Right ventricle myocardium inferior (tissue), 1 donor: ENCODE measurements at regions of chr9 and their contacts with region 1.

Region 1: GRCh38 chr9:15422372-15423230 is at the start of gene SNAPC3:
- DNase-seq: peak; percentile 97
- ATAC-seq: peak; percentile 100
- total RNA-seq, gene SNAPC3: 28.2 TPM

Region 2: DNA sequence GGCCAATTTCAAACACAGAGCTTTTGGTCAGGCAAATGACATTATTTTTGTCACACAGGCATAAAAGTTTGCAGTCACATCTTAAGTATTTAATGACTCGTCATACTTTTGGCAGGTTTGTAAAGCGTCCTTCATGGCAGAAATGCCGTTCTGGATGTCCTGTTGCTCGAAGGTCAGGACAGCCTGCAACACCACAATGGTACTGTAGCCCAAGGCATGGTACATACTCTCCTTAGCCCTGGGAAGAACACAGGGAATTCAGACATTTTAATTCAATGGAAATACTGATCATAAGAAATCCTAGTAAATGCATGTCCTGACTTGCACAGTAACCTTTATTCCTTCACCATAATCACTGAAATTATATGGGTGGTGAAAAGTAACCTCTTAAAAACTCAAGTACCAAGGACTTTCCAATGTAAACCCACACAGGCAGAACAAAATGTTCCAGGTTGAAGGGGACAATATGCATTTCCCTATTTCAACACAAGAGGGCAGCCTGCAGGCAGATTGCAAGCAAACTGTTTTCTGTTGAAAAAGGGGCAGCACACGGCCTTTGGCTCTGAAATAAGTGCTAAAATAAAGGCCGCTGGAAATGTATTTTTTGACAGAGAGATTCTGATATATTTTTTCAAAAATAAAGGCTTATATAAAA is 211.3 kb before region 1 on chr9:
- intact Hi-C with region 1: loop called (anchors 5 kb)
- DNase-seq: no peak
- ATAC-seq: peak; percentile 48

Region 3: DNA sequence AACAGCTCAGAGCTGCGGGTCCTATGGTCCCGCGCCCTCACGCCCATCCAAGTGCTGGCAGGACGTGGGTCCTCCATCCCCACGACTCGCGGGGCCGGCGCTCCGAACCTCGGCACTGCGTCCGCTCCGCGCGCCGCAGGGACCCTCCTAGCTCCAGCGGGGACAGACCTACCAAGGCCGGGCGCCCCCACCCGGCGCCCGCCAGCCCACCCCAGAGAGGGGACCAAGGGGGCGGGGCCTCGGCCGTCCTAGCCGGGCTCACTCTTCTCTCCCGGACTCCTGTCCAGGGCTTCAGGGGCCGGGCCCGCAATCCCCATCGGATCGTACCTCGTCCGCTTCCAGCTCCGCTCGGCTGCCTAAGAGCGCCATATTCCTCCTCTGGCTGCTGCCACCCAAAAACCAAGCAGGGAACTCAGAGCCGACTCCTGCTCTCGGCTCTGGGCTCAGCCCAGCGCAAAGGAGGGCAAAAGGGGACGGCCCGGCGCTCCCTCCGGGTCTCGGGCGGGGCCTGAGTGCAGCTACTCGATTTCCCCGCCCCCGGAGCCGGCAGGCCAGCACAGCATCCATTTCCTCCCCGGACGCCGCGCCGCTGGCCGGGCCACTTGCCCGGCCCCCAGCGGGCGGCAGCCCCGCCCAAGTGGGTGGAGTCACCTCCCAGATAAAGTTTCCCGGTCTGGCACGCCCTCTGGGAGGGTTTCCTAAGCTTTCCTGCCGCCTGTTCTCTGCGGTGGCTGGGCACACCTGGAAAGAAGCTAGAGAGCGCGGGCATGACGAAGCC is 115.7 kb before region 1 on chr9 and contains the start of gene TTC39B:
- intact Hi-C with region 1: loop called (anchors 5 kb)
- DNase-seq: peak; percentile 97
- ATAC-seq: peak; percentile 99
- total RNA-seq, gene TTC39B: 1.9 TPM

Region 4: DNA sequence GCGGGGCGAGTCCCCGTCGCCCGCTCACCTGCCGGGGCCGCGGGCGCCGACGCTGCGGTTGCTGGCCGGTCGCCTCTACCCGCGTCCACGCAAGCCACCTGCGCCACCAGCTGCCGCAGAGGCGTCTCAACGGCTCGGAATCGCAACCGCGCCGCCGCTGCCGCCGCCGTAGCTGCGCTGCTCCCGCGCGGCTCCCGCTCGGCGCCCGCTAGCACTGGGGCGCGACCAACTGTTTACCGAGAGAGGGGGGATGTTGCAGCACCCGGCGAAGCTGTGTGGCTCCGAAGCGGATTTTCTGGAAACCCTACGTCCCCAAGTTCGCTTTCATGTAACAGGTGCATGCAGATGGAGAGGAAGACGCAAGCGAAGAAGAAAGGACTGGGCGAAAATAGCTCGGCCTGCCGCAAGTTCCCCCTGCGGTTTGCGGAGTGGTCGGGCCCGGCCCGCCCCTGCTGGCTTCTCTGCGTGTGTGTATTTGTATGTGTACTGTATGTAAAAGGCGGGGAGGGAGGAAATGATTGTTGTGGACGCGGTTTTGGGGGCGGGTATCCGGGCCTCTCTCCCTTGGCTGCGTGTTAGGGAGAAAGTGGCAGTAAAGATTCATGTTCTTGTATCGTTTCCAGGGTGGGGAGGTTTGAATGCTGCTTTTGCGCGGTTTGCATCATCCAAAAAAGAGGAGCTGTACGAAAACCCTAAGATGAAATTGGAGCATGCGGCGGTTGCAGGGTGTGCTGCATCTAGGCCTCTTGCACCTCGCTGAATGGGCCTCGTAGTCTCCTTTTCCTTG is 88.4 kb after region 1 on chr9 and contains the start of gene PSIP1:
- intact Hi-C with region 1: loop called (anchors 5 kb)
- DNase-seq: peak; percentile 91
- ATAC-seq: peak; percentile 94
- total RNA-seq, gene PSIP1: 21.1 TPM

Region 5: GRCh38 chr9:15552636-15553527 is 130.3 kb after region 1 on chr9 and contains the start of gene CCDC171:
- intact Hi-C with region 1: loop called (anchors 2 kb)
- DNase-seq: peak; percentile 95
- ATAC-seq: peak; percentile 98
- total RNA-seq, gene CCDC171: 1.6 TPM